ENCODE measurements at regions of chr5 and their contacts with region 1.

Region 1: GRCh38 chr5:132688536-132689339 is 14.9 kb downstream of the IL4 start:
- DNase-seq: peak; percentile 36
- H3K4me3 Mint-ChIP-seq: no peak overlapping the region
- H3K27ac Mint-ChIP-seq: peak overlapping the region; percentile 24
- H3K4me1 Mint-ChIP-seq: peaks cover 36% of the 10 kb centered on the region
- H3K27me3 Mint-ChIP-seq: no peaks in the 10 kb centered on the region

Region 2: GRCh38 chr5:131581702-131582101 is 1107.0 kb before region 1 on chr5:
- CTCF ChIA-PET with region 1: no interaction called
- POLR2A ChIA-PET with region 1: no interaction called
- intact Hi-C with region 1: no loop called
- DNase-seq: no peak
- H3K4me3 Mint-ChIP-seq: no peak overlapping the region
- H3K27ac Mint-ChIP-seq: no peak overlapping the region
- H3K4me1 Mint-ChIP-seq: peaks cover 40% of the 10 kb centered on the region
- H3K27me3 Mint-ChIP-seq: no peaks in the 10 kb centered on the region

Region 3: DNA sequence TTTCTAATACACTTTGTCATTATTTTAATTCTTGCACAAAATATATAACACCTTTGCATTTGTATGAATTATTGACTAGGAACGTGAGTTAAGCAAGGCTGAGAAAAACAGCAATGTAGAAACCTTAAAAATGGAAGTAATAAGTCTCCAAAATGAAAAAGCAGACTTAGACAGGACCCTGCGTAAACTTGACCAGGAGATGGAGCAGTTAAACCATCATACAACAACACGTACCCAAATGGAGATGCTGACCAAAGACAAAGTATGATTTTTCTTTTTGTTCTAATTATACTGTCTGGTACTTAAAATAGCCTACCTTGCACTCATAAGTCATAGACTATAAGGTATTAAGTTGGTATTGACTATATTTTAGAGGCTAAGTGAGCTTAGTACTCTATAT is 97.6 kb before region 1 on chr5:
- CTCF ChIA-PET with region 1: no interaction called
- POLR2A ChIA-PET with region 1: no interaction called
- intact Hi-C with region 1: no loop called
- DNase-seq: no peak
- H3K4me3 Mint-ChIP-seq: no peak overlapping the region
- H3K27ac Mint-ChIP-seq: no peak overlapping the region
- H3K4me1 Mint-ChIP-seq: peaks cover under 1% of the 10 kb centered on the region
- H3K27me3 Mint-ChIP-seq: no peaks in the 10 kb centered on the region

Region 4: DNA sequence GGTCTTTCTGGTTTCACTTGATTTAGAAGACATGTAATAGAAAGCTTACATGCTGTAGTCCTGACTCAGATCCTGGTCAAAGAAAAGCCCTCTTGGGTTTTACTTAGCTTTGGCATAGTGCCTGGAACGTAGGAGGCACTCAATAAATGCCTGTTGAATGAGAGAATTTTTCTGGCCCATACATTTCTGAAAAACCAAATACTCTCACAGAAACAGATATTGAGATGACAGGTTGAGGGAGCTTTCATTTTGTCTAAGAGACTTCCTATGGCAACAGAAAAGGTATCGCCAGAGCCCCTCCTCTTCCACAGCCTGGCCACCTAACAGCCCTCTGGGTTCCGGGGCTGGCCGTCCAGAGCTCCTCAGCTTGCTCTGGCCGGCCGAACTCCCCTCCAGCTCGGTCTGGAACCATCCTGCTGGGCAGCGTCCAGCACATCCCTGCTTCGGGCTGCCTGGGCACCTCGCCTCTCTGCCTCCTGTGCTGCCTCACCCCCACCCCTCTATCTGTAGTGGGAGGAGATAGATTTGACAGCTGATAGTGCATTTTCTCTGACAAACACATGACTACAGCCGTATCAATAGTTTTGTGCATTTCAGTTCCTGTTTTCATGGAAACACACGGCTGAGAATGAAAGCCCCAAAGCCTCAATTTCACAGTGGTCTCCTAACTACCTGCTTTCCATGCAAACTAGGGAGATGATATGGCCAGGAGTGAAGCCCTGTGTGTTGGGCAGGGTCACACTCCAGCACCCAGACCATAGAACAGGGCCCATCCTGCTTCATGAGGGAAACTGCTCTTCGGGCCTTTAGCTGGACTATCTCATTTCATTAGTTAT is 13.8 kb before region 1 on chr5:
- CTCF ChIA-PET with region 1: interaction called, 3 read pairs
- POLR2A ChIA-PET with region 1: interaction called, 6 read pairs
- intact Hi-C with region 1: loop called (anchors 1 kb)
- DNase-seq: no peak
- H3K4me3 Mint-ChIP-seq: peak overlapping the region; percentile 28
- H3K27ac Mint-ChIP-seq: peak overlapping the region; percentile 73
- H3K4me1 Mint-ChIP-seq: peaks cover 27% of the 10 kb centered on the region
- H3K27me3 Mint-ChIP-seq: no peaks in the 10 kb centered on the region

Measured in activated CD4-positive, alpha-beta memory T cell treated with anti-CD3 and anti-CD28 coated beads for 36 hours (primary cell).